ENCODE measurements at regions of chr2 and their contacts with region 1.

Region 1: DNA sequence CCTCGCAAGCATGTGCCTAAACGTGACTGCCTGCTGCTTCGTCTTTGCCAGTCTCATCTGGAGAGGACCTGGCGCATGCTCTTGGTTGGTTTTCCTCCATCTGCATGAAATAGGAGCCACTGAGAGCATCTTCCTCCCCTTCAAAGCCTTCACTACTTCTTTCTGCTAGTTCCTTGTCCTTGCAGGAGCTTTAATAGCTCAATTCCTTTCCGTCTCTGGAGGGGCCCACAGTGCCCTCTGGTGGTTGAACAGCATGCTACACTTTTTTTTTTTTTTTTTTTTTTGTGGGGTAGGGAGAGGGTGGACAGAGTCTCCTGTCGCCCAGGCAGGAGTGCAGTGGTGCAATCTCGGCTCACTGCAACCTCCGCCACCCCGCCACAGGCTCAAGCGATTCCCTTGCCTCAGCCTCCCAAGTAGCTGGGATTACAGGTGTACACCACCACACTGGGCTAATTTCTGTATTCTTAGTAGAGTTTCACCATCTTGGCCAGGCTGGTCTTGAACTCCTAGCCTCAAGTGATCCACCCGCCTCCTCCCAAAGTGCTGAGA is 59.6 kb downstream of the SP110 start:
- DNase-seq: peak; percentile 40
- ATAC-seq: peak; percentile 73

Region 2: DNA sequence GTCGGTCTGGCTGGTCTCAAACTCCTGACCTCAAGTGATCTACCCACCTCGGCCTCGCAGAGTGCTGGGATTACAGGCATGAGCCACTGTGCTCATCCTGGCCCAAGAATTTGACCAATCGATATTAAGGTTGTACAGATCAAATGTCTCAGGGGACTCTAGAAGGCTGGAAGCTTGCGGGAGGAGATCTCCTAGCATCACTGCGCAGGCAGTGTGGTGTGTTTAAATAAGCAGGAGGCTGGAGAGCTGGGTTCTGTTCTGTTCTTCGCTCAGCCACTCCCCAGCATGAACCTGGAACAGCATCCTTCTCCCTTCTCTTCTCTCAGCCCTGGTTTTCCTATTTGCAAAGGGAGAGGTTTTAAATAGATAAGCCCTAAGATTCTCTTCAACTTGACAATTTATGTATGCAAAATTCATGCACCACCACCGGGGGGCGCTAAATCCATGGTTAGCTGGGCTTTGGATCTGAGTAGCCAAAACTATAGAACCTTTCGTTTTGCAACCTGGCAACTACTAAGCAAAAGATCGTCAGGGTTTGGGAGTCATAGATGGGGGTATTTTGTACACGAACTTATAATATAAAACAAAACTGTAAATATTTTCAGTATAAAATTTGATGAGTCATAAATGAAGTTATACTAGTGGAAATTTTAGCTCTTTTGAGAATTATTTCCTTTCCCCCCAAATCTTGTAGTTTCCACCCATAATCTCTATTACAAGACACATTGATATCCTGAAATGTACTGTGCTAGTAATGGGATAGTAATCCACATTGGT is 152.1 kb before region 1 on chr2:
- intact Hi-C with region 1: loop called (anchors 1 to 5 kb)
- DNase-seq: peak; percentile 73
- ATAC-seq: peak; percentile 61 to 78